ENCODE measurements at regions of chr6 and their contacts with region 1.

Region 1: GRCh38 chr6:37102279-37103168 is 67.4 kb upstream of the PIM1 start:
- DNase-seq: peak; percentile 94
- ATAC-seq: peak; percentile 93 to 94

Region 2: DNA sequence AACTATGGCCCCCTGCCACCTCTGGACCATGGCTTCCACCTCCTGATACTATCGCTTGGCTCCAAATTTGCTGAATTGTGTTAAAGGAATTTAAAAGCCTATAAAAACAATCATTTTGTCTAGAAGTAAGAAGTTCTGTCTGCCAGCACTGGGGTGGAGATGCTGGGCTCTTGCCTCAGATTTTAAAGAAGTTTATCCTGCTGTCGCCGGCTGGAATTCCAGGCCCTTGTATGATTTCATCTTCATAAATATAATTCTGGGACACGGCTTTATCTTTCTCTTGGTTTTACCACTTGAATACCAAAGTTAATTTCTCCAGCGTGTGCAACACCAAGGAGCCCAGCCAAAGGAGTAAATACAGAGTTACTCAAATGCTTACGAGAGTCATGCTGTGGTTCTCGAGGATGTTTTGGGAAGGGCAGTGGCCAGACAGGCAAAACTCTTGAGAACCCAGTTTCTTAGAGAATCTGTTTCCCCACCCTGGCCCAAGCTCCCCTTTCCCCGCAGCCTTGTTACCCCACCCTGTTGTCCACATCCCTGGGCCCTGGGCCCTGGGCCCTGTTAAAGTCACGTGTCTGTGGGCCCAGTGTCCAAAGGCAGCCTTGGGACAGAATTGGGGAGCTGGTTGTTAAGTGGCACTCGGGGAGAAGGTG is 184.9 kb before region 1 on chr6:
- intact Hi-C with region 1: no loop called
- DNase-seq: peak; percentile 40
- ATAC-seq: peak; percentile 69

Region 3: DNA sequence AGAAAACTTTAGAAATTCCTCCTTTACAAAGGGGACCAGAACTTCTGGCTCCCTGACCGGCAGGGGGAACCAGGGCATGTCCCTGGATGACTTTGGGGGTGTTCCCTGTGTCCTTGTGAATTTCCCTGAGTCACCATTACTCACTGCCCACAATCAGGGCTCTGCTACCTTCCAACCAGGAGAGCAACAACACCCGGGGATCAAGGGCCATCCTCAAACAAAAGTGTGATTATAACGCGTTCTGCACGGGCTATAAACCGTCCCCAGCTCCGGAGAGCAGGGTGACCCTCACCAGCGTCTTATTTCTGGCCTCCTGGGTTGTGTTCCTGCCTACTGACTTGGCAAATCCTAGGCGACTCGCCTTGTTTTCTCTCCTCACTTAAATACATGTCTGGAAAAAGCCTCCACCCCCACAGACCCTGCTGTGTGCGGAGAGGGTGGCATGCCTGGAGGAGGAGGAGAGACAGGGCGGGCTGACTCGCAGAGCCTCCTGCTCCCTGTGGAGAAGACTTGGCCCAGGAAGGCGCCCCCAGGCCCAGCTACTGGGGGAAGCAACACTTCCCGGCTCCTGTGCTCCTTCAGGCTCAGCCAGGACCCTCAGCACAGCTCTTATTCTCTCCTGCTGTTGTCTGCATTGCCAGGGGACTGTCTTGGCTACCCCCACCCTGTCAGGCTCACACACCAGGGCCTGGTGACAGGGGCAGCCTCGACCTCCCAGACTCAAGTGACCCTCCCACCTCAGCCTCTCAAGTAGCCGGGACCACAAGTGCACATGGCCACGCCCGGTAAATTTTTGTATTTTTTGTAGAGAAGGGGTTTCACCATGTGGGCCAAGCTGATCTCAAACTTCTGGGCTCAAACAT is 42.9 kb before region 1 on chr6:
- intact Hi-C with region 1: loop called in 1 of 2 experiments (anchors 5 kb)
- DNase-seq: peak; percentile 78
- ATAC-seq: peak; percentile 69 to 93

Region 4: GRCh38 chr6:37127961-37128862 is 25.7 kb after region 1 on chr6:
- intact Hi-C with region 1: loop called in 1 of 2 experiments (anchors 1 kb)
- DNase-seq: peak; percentile 50
- ATAC-seq: peak; percentile 32 to 52